Cardiac septum (tissue), 1 donor: ENCODE measurements at regions of chr9 and their contacts with region 1.

Region 1: DNA sequence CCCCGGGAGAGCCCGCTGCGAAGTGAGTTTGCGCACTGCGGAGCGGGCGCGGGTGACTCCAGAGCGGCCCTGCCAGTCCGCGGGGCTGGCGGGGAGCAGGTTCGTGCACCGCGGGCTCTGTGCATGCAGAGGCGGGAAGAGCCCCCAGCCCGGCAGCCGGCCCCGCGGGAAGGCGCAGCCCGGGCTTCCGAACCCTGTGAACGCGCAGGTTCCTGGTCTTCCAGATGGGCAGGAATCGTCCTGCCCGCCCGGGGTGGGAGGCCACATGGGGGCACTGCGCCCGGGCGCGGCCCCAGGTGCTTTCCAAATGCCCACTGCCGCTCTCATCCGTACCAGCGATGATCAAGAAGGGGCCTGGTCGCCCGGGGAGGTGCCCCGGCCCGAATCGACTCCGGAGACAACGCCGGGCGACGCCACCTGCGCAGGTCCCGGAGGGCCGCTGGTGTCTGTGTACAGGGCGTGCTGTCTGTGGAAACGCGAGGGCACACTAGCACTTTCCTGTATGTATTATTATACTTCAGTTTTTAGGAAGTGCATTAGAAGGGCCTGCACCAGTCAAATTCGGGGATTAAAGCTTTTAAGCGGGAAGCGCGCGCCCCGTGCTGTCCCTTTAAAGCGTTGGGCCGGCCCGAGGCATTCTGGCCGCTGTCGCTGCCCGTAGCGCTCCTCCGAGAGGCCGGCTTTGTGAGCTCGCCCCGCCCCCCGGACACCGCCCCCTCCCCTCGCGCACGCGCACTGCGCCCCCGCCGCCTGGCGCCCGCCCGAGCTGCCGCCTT is at the start of gene WDR5:
- DNase-seq: peak; percentile 97
- total RNA-seq, gene WDR5: 16.6 TPM

Region 2: DNA sequence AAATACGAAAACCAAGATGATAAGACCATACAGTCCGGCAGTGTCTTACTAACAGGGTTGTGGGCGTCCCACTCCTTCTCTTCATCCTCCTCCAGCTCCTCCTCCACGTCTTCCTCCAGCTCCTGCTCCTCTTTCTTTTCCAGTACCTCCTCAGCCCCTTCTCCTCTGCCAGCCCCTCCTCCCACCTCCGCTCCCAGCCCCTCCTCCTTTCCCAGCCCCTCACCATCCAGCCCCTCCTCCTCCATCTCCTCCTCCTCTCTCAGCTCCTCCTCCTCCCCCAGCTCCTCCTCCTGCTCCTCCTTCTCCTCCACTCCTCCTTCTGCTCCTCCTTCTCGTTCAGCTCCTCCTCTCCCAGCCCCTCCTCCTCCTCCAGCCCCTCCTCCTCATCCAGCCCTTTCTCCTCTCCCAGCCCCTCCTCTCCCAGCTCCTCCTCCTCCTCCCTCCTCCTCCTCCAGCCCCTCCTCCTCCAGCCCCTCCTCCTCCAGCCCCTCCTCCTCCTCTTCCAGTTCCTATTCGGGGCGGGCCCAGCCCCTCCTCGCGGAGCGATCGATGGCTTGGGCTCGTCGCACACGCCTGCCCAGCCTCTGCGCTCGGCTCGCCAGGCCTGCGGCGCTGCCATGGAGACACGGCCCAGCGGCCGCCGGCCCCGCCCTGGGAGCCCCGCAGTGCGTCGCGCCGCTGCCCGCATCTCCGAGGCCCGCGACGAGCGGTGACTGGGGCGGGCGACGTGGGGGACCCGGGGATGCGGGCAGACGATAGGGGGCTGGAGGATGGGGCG is 110.5 kb before region 1 on chr9 and contains the start of gene BRD3OS:
- intact Hi-C with region 1: loop called (anchors 5 kb)
- DNase-seq: peak; percentile 98
- total RNA-seq, gene BRD3OS: 9.0 TPM

Region 3: GRCh38 chr9:134067904-134068743 is 67.4 kb before region 1 on chr9 and contains the start of gene BRD3:
- intact Hi-C with region 1: loop called (anchors 2 kb)
- DNase-seq: peak; percentile 91
- total RNA-seq, gene BRD3: 27.5 TPM

Region 4: DNA sequence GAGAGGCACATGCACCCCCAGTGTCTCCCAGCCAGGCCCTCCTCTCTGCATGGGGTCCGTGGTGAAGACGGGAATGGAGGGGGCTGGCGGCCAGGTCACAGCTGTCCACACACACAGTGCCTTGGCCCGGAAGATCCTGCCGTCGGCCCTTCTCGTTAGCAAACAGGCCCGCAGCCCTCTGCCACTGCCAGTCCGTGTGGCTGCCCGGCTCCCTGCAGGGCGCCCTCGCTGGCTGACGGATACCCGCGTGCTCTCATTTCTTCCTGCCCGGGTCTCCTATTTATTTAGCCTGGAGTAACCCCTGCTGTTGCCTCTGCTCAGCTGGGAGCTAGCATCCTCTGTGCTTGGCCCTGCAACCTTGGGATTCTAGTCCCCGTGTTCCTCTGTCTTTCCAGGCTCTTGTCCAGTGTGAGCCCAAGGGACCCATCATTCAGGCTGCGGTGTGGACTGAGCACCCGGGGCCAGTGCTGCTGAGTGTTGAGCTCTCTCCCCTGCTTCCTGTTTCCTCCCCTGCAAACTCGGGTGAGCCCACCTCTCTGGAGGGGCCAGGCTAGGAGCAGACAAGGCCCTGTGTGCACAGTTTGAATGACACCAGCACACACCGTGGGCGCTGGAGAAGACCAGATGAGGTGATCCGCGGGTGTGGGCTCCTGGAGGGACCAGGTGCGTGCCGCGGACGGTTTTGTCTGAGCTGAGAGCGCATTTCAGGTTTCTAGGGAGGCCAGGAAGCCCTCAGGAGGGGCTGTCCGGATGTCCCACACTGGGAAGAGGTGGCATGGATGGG is 43.4 kb after region 1 on chr9:
- intact Hi-C with region 1: no loop called
- DNase-seq: peak; percentile 74

Region 5: DNA sequence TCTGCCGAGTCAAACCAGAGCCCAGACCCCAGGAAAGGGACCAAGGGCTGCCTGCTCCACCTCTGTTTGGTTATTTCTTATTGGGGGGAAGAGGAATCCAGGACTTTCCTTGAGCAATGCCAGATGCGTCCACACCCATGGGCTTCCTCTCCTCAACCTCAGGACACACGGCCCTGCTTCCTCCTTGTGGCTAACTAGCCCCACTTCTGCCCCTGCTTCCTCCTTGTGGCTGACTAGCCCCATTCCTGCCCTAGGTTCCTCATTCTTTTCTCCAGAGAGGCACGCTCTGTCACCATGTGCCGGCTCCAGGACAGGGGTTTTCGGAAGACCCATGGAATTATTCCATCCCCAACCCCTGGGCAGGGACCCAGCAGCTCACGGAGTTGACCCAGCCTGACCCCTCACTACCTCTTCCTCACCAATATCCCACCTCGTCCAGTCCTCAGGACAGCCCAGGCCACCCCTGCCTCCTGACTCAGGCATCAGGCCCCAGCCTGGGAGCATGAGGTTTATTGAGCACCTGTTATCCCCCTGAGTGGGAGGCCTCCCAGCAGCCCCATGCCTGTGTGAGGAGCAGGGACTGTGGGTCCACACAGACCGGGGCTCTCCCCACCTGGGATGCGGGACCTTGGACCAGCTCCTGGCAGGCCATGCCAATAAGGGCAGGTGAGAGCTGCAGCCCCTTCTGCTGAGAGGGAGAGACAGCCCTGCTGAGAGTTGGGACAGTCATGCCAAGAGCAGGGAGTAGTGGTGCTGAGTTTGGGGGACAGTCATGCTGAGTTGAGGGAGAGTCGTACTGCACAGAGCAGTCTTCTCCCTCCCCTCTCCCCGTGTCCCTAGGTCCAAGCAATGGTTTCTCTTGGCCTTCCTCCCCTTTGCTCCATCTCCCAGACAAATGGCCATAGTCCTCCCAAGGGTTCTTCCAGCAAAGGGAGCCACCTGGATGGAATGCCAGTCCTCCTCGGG is 793.9 kb after region 1 on chr9:
- intact Hi-C with region 1: no loop called
- DNase-seq: peak; percentile 90